Dendritic cell treated with granulocyte-macrophage colony-stimulating factor and Interleukin-4, amounts not matched to agents 40 ng/mL and 50 ng/mL, for 4 days (primary cell): ENCODE measurements at regions of chr14 and their contacts with region 1.

Region 1: GRCh38 chr14:24232121-24232644 is at the start of gene NEDD8:
- H3K4me3 Mint-ChIP-seq: peak within 1 kb of the TSS; percentile 92
- H3K27ac Mint-ChIP-seq: peak within 1 kb of the TSS; percentile 88
- H3K4me1 Mint-ChIP-seq: peaks cover 66% of the 10 kb centered on the region
- H3K27me3 Mint-ChIP-seq: no peaks in the 10 kb centered on the region

Region 2: GRCh38 chr14:24146978-24147760 is 85.0 kb before region 1 on chr14 and contains the start of gene RNF31:
- intact Hi-C with region 1: loop called (anchors 2 kb)
- H3K4me3 Mint-ChIP-seq: peak within 1 kb of the TSS; percentile 98
- H3K27ac Mint-ChIP-seq: peak within 1 kb of the TSS; percentile 91
- H3K4me1 Mint-ChIP-seq: peaks cover 59% of the 10 kb centered on the region
- H3K27me3 Mint-ChIP-seq: no peaks in the 10 kb centered on the region

Region 3: DNA sequence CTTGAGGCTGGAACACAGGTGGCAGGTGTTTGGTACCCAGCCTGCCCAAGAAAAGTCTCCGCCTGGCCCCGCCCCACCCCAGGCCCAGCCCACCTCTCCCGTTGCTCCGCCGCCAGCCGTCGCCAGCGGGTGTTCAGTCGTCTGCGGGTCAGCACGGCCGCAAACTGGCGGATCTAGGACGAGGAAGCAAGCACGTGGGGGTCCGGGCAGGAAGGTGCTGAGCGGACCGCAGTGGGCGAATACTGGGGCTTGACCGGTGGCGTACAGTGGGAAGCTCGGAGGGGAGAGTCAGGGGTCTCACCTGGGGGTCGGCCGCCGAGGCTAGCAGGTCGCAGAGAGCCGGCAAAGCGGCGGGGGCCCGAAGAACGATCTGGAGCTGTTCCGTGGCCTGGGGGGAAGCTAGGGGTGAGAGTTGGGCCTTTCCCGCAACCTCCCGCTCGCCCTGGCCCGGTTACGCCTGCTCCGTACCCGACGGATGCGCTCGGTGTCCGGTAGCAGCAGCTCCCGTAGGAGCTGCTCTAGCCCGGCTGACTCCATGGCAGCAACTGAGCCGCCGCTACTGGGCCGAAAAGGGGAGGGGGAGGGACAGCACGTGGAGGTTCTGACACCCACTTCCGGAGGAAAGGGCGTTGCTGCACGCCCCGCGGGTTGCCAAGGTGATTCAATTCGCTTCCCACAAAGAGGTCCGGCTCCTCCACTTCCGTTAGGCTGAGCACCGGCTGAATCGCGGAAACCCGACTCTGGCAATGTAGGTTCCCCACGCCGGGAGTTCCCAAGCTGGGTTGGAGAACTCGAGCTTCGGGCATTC is 43.7 kb before region 1 on chr14 and contains the start of gene IPO4:
- intact Hi-C with region 1: loop called (anchors 1 kb)
- H3K4me3 Mint-ChIP-seq: peak within 1 kb of the TSS; percentile 85
- H3K27ac Mint-ChIP-seq: peak within 1 kb of the TSS; percentile 81
- H3K4me1 Mint-ChIP-seq: peaks cover 47% of the 10 kb centered on the region
- H3K27me3 Mint-ChIP-seq: no peaks in the 10 kb centered on the region

Region 4: DNA sequence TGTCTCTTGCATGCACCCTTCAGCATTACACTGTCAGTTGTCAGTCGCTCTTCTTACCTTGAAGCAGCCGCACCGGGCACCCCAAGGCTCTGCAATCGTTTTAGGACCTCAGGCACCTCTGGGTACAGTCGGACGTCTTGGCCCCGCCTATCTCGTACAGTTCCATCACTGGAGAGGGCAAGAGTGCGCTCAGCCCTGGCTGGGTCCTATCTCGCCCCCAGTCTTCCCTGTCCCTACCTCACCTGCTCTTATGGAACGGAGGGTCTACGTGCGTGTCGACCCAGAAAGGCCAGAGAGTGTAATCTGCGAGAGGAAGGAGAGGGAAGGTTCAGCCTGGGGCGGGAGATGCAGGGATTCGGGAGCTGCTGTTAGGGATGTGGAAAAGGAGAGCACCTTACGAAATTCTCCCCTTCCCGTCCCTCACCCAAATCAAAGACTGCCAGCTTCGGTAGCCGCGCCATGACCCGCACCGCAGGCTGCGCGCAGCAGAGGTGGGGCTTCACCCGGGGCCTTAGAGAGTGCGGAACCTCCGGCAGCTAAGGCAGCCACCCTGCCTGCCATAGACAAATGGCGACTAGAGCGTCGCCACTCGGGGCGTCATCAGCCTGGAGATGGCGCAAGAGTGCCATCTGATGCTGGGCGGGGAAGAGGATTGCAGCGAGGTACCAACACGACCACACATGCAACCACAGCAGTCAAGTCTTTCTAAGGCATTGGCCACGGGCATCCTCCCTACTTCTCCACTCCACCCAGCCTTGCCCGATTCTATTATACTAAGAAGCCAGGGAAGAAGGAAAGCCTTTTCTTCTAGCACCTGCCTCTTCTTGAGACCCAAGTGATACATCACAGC is 16.5 kb before region 1 on chr14 and contains the start of gene MDP1:
- intact Hi-C with region 1: loop called (anchors 1 kb)
- H3K4me3 Mint-ChIP-seq: peak within 1 kb of the TSS; percentile 90
- H3K27ac Mint-ChIP-seq: peak within 1 kb of the TSS; percentile 99
- H3K4me1 Mint-ChIP-seq: peaks cover 41% of the 10 kb centered on the region
- H3K27me3 Mint-ChIP-seq: no peaks in the 10 kb centered on the region